Left lung (tissue), 14 donors: ENCODE measurements at regions of chr11 and their contacts with region 1.

Region 1: DNA sequence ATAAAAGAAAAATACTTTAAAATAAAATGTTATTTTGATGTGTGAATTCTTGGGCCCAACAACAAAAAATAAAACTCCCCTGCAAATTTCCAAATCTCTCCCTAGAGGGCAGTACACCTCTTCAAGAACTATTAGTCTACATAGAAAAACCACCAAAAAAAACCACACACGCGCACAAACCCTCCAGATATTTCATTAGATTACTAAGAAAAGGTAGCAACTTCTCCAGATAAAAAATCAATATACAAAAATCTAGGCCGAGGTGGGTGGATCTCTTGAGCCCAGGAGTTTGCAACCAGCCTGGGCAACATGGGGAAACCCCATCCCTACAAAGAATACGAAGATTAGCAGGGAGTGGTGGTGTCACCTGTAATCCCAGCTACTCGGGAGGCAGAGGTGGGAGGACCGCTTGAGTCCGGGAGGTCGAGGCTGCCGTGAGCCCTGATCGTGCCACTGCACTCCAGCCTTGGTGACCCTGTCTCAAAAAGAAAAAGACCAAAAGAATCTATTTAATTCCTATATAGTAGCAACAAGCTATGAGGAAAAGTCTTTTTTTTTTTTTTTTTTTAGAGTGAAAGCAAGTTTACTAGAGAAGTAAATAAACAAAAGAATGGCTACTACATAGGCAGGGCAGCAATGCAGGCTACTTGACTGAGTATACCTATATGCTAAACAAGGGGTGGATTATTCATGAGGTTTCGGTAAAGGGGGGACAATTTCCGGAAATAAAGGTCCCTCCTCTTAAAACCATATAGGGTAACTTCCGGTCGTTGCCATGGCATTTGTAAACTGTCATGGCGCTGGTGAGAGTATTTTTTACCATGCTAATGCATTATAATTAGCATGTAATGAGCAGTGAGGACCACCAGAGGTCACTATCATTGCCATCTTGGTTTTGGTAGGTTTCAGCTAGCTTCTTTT is 13.1 kb downstream of the B3GNT6 start:
- DNase-seq: peak in 3 of 4 donors; percentile 70 to 94 (median 88)
- ATAC-seq: peak; percentile 90
- H3K4me3 ChIP-seq: peak overlapping the region; percentile 32 to 40
- H3K27ac ChIP-seq: peak overlapping the region in 1 of 2 donors; percentile 48
- H3K4me1 ChIP-seq: peaks cover 0 to 15% of the 10 kb centered on the region in 2 donors
- H3K27me3 ChIP-seq: peaks cover 0 to 37% of the 10 kb centered on the region in 2 donors
- CTCF ChIP-seq: peak; percentile 59 to 77

Region 2: DNA sequence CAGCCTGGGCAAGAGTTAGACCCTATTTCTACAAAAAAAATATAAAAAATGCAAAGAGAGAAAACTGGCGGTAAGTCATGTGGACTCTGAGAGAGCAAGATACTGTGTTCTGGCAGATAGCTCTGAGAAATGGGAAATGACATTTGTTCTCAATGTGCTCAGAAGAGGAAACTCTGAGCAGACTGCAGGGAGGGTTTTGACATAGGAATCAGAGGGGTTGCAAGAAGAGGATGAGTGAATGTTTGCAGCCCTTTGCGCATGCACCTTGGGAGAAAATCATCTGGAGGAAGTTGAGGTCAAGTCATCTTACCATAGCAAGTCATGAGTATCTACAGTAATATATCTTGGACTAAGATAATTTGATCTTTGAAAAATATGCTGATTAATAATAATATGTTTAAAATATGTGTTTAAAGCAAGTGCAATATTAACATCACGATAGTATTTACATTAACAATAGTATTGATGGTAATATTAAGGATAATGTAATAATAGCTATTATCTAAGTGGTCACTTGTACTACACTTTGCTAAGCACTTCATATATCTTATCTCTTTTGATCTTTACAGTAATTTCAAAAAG is 184.0 kb before region 1 on chr11:
- intact Hi-C with region 1: no loop called
- DNase-seq: peak in 1 of 4 donors; percentile 50
- ATAC-seq: no peak
- H3K4me3 ChIP-seq: peak overlapping the region in 1 of 2 donors; percentile 68
- H3K27ac ChIP-seq: peak overlapping the region in 1 of 2 donors; percentile 70
- H3K4me1 ChIP-seq: peaks cover 4 to 79% of the 10 kb centered on the region in 2 donors
- H3K27me3 ChIP-seq: no peaks in the 10 kb centered on the region
- CTCF ChIP-seq: no peak

Region 3: DNA sequence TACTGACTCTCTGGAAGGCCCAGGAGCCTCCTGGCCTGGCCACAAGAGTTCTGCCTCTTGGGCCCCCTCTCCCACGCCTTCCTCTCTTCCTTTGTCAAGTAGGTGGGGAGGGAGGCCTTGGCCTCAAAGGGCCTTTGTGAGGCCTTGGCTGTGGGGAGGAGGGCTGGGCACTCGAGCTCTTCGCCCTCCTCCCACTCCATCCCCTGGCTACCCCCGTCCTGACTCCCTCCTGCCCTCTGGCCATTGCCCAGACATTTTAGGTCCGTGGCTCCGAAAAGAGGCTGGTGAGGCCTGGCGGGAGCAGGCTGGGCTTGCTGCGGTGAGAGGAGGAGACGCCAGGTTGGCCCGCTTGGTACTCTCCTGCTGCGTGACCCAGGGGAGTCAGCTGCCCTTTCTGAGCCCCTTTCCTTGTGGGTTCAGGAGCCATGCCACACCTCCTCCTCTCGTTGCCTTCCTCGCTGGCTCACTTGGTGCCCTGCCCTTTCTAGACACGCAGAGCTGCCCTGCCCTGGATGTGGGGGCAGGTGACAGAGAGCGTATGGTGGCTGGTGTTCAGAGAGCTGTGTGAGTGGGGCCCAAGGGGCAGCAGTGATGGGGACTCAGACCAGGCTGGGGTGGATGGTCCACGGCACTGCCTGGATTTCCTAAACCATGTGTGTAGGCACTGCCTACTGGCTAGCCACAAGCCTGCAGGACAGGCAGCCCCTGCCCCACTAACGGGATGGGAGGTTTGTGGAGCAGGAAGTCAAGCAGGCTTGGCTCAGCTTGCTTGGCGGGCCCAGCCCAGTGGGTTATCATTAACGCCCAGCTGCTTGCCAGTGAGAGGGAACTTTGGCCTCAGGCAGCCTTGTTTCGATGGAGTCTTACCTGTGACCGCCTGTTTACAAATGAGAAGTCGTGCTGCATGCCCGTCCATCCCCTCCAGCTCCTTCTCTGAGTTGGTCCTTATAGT is 39.5 kb after region 1 on chr11:
- intact Hi-C with region 1: loop called in 1 of 2 experiments (anchors 5 kb)
- DNase-seq: peak in 2 of 4 donors; percentile 17 to 55
- ATAC-seq: no peak
- H3K4me3 ChIP-seq: no peak overlapping the region
- H3K27ac ChIP-seq: no peak overlapping the region
- H3K4me1 ChIP-seq: peaks cover 5 to 13% of the 10 kb centered on the region in 2 donors
- H3K27me3 ChIP-seq: no peaks in the 10 kb centered on the region
- CTCF ChIP-seq: no peak

Region 4: GRCh38 chr11:77411717-77412441 is 364.6 kb after region 1 on chr11:
- intact Hi-C with region 1: no loop called
- DNase-seq: peak; percentile 79 to 99 (median 92)
- ATAC-seq: peak; percentile 99
- H3K4me3 ChIP-seq: peak overlapping the region; percentile 38 to 58
- H3K27ac ChIP-seq: peak overlapping the region; percentile 41 to 80
- H3K4me1 ChIP-seq: peaks cover 0 to 51% of the 10 kb centered on the region in 2 donors
- H3K27me3 ChIP-seq: no peaks in the 10 kb centered on the region
- CTCF ChIP-seq: no peak